Calu3 (cell line): ENCODE measurements at regions of chr16 and their contacts with region 1.

Region 1: GRCh38 chr16:87636072-87636684 is 33.9 kb downstream of the JPH3 start:
- DNase-seq: peak; percentile 91
- H3K4me3 Mint-ChIP-seq: peak overlapping the region; percentile 67
- H3K27ac Mint-ChIP-seq: no peak overlapping the region
- H3K4me1 Mint-ChIP-seq: no peaks in the 10 kb centered on the region
- H3K27me3 Mint-ChIP-seq: peaks cover 79% of the 10 kb centered on the region
- CTCF ChIP-seq: peak; percentile 74

Region 2: GRCh38 chr16:87316923-87317749 is 319.0 kb before region 1 on chr16 and contains the start of gene C16orf95:
- CTCF ChIA-PET with region 1: interaction called, 4 read pairs
- intact Hi-C with region 1: loop called (anchors 10 kb)
- DNase-seq: peak; percentile 98
- H3K4me3 Mint-ChIP-seq: peak within 1 kb of the TSS; percentile 98
- H3K27ac Mint-ChIP-seq: peak within 1 kb of the TSS; percentile 94
- H3K4me1 Mint-ChIP-seq: peaks cover 14% of the 10 kb centered on the region
- H3K27me3 Mint-ChIP-seq: no peaks in the 10 kb centered on the region
- CTCF ChIP-seq: peak; percentile 42
- total RNA-seq, gene C16orf95: 3.8 and 3.9 TPM in 2 replicates

Region 3: GRCh38 chr16:87416826-87417527 is 219.2 kb before region 1 on chr16:
- CTCF ChIA-PET with region 1: interaction called, 29 read pairs
- intact Hi-C with region 1: loop called (anchors 2 kb)
- DNase-seq: peak; percentile 51
- H3K4me3 Mint-ChIP-seq: no peak overlapping the region
- H3K27ac Mint-ChIP-seq: no peak overlapping the region
- H3K4me1 Mint-ChIP-seq: no peaks in the 10 kb centered on the region
- H3K27me3 Mint-ChIP-seq: no peaks in the 10 kb centered on the region
- CTCF ChIP-seq: peak; percentile 47

Region 4: DNA sequence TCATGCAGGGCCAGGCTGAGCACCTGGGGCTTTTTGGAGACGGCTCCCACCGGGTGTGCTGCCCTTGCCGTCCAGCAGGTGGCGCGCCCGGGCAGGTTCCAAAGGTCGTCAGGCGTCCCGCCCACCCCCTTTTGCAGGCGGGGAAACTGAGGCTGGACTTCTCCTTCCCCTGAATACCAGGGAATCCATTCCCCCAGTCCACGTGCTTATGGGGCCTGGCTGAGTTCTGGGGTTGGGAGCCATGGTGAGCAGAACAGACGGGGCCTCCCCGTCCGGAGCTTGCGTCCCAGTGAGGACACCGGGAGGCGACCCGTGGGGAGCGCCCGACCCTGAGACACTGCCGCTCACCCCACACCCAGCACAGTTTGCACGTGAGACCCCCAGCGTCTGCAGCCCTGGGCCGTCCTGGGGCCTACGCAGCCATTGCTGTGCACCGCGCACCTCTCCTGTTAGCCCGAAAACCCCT is 85.6 kb before region 1 on chr16:
- CTCF ChIA-PET with region 1: interaction called, 5 read pairs
- intact Hi-C with region 1: loop called (anchors 5 kb)
- DNase-seq: peak; percentile 70
- H3K4me3 Mint-ChIP-seq: no peak overlapping the region
- H3K27ac Mint-ChIP-seq: no peak overlapping the region
- H3K4me1 Mint-ChIP-seq: peaks cover 16% of the 10 kb centered on the region
- H3K27me3 Mint-ChIP-seq: peaks cover 80% of the 10 kb centered on the region
- CTCF ChIP-seq: peak; percentile 98

Region 5: DNA sequence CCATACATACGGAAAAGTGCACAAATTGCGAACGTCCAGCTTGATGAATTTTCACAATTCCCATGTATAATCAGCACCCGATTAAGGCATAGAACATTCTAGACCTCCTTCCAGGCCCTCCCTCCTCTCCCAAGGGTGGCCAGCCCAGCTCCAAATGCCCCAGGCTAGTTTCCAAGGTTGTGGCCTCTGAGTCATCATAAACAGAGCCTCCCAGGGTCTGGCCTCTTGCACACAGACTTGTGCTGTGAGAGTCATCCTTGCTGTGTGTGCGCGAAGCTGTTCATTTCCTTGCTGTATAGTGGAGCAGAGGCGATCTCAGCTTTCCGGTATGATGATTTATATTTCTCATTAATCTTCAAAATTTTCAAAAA is 54.4 kb before region 1 on chr16:
- CTCF ChIA-PET with region 1: interaction called, 57 read pairs
- intact Hi-C with region 1: no loop called
- DNase-seq: peak; percentile 81
- H3K4me3 Mint-ChIP-seq: peak overlapping the region; percentile 9
- H3K27ac Mint-ChIP-seq: no peak overlapping the region
- H3K4me1 Mint-ChIP-seq: peaks cover 29% of the 10 kb centered on the region
- H3K27me3 Mint-ChIP-seq: peaks cover 41% of the 10 kb centered on the region
- CTCF ChIP-seq: no peak

Region 6: DNA sequence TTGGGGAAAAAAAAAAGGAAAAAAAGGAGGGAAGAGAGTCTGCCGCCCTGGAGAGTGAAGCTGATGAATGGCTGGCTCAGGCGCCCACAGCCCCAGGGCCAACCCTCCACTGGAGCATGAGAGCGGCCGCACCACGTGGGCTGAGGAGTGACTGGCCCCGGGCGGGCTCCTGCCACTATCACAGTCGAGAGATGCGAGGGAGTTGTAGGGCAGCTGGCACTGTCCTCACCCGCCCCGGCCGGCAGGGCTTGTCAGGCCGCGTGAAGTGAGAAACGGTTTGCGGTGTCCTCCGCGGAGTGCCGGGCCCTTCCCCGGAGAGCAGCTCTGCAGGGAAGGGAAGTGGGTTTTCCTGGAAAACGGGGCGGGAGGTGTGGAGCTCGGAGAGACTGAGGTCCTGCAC is 12.1 kb after region 1 on chr16:
- CTCF ChIA-PET with region 1: interaction called, 11 read pairs
- intact Hi-C with region 1: no loop called
- DNase-seq: no peak
- H3K4me3 Mint-ChIP-seq: no peak overlapping the region
- H3K27ac Mint-ChIP-seq: no peak overlapping the region
- H3K4me1 Mint-ChIP-seq: peaks cover 8% of the 10 kb centered on the region
- H3K27me3 Mint-ChIP-seq: peaks cover 96% of the 10 kb centered on the region
- CTCF ChIP-seq: no peak